ENCODE measurements at regions of chr2 and their contacts with region 1.

Region 1: DNA sequence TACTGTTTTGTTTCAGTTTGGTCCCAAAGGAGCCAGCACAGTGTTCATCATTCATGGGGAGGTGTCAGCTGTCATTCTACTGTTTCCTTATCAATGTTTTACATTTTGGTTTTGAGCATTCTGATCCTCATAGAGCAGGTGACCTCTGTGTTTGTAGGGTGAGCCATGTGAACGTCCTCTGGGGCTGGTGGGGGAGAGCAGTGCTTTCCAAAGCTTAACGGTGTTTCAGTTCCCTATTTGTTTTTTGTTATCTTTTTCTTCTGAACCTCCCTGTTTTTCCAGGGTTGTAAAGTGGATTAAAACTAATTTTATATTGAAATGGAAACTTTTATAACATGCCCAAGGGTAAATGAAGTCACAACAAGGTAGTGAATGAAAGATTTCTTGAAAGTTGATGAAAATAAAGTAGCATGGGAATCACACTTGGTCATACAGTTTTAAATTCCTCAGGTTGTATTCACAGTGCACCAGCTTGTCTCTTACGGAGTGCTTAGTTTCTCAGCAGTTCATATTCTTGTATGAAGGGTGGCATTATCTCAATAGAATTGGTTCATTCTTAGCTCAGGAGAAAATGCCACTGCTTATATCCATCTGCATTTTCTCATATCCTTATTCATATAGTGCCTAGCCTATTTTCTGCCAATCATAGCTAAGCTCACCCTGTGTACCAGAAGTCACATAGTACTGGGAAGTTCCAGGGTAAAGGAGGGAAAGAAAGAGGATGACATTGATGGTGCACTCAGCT is 54.5 kb downstream of the MAP4K4 start:
- DNase-seq: no peak
- ATAC-seq: peak; percentile 83
- H3K4me3 Mint-ChIP-seq: peak overlapping the region; percentile 65
- H3K27ac Mint-ChIP-seq: peak overlapping the region; percentile 76
- H3K4me1 Mint-ChIP-seq: peaks cover 81% of the 10 kb centered on the region
- H3K27me3 Mint-ChIP-seq: no peaks in the 10 kb centered on the region
- CTCF ChIP-seq: no peak

Region 2: GRCh38 chr2:101308432-101309210 is 443.4 kb before region 1 on chr2 and contains the start of gene RNF149:
- CTCF ChIA-PET with region 1: no interaction called
- POLR2A ChIA-PET with region 1: interaction called, 3 read pairs
- intact Hi-C with region 1: loop called (anchors 5 kb)
- DNase-seq: peak; percentile 97
- ATAC-seq: peak; percentile 79
- H3K4me3 Mint-ChIP-seq: peak within 1 kb of the TSS; percentile 85
- H3K27ac Mint-ChIP-seq: peak within 1 kb of the TSS; percentile 90
- H3K4me1 Mint-ChIP-seq: peaks cover 54% of the 10 kb centered on the region
- H3K27me3 Mint-ChIP-seq: no peaks in the 10 kb centered on the region
- CTCF ChIP-seq: no peak
- total RNA-seq, gene RNF149: 39.6 and 48.3 TPM in 2 replicates

Region 3: GRCh38 chr2:101717071-101717845 is 34.8 kb before region 1 on chr2:
- CTCF ChIA-PET with region 1: interaction called, 5 read pairs
- POLR2A ChIA-PET with region 1: interaction called, 6 read pairs
- intact Hi-C with region 1: loop called (anchors 1 kb)
- DNase-seq: no peak
- ATAC-seq: peak; percentile 82
- H3K4me3 Mint-ChIP-seq: peak overlapping the region; percentile 72
- H3K27ac Mint-ChIP-seq: peak overlapping the region; percentile 94
- H3K4me1 Mint-ChIP-seq: peaks cover 97% of the 10 kb centered on the region
- H3K27me3 Mint-ChIP-seq: no peaks in the 10 kb centered on the region
- CTCF ChIP-seq: no peak

Region 4: GRCh38 chr2:101770726-101771125 is 18.7 kb after region 1 on chr2:
- CTCF ChIA-PET with region 1: interaction called, 6 read pairs
- POLR2A ChIA-PET with region 1: interaction called, 3 read pairs
- intact Hi-C with region 1: loop called (anchors 2 kb)
- DNase-seq: no peak
- ATAC-seq: peak; percentile 44
- H3K4me3 Mint-ChIP-seq: no peak overlapping the region
- H3K27ac Mint-ChIP-seq: peak overlapping the region; percentile 12
- H3K4me1 Mint-ChIP-seq: peaks cover 95% of the 10 kb centered on the region
- H3K27me3 Mint-ChIP-seq: no peaks in the 10 kb centered on the region
- CTCF ChIP-seq: peak; percentile 0

Region 5: DNA sequence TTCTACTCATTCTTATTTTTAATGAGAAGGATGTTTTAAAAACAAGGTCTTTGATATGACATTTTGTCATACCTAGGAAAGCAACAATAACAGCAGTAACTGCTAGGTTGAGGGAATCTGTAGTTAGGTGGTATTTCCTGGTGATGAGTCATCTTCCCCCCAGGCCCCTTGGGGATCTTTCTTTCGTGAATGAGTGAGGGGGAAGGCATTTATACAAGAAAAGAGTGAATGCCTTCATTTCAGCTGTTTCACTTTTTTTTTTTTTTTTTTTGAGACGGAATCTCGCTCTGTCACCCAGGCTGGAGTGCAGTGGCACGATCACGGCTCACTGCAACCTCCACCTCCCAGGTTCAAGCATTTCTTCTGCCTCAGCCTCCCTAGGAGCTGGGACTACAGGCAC is 54.1 kb after region 1 on chr2:
- CTCF ChIA-PET with region 1: no interaction called
- POLR2A ChIA-PET with region 1: interaction called, 5 read pairs
- intact Hi-C with region 1: loop called (anchors 2 kb)
- DNase-seq: peak; percentile 43
- ATAC-seq: peak; percentile 88
- H3K4me3 Mint-ChIP-seq: peak overlapping the region; percentile 66
- H3K27ac Mint-ChIP-seq: peak overlapping the region; percentile 75
- H3K4me1 Mint-ChIP-seq: peaks cover 79% of the 10 kb centered on the region
- H3K27me3 Mint-ChIP-seq: no peaks in the 10 kb centered on the region
- CTCF ChIP-seq: no peak